Activated naive CD4-positive, alpha-beta T cell treated with anti-CD3 and anti-CD28 coated beads, Interleukin-2, amount 10 ng/mL, durations not matched to agents 7 days and 5 days (primary cell): ENCODE measurements at regions of chr6 and their contacts with region 1.

Region 1: DNA sequence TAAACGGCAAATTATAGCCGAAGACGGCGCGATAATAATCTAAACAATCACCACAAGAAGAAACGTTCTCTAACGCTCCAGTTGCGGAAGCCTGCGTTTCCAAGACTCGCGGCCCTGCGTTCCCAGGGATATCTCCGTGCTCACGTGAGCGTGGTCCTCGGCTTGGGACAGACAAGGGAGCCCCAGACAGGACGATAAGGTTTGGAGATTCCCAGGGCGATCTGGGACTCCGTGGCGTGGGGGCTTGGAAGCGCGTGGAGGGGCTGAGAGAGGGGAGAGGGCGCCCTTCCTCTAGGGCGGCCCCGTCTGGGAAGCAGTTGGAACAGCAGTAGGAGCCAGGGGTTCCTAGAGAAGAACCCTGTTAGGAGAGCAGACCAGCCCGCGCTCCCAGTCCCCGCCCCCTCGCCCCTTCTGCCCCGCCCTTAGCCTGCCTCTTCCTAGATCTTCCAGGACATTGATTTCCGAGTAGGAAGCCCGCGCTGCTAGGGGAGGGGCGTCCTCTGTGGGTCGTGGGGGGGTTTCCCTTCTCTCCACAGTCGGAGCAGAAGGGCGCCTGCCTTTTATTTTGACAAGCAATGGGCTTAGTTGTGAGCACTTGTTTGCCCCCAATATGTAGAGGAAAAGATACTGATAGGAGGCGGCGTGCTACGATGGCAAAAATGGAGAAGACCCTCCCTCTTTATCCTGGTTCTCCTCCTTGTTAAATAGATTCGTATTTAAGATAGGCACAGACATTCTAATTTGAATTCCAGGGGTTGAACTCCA is 10.6 kb downstream of the NRN1 start:
- DNase-seq: peak; percentile 59
- H3K4me3 Mint-ChIP-seq: peak overlapping the region; percentile 93
- H3K27ac Mint-ChIP-seq: peak overlapping the region; percentile 73
- H3K4me1 Mint-ChIP-seq: peaks cover 73% of the 10 kb centered on the region
- H3K27me3 Mint-ChIP-seq: peaks cover 100% of the 10 kb centered on the region

Region 2: DNA sequence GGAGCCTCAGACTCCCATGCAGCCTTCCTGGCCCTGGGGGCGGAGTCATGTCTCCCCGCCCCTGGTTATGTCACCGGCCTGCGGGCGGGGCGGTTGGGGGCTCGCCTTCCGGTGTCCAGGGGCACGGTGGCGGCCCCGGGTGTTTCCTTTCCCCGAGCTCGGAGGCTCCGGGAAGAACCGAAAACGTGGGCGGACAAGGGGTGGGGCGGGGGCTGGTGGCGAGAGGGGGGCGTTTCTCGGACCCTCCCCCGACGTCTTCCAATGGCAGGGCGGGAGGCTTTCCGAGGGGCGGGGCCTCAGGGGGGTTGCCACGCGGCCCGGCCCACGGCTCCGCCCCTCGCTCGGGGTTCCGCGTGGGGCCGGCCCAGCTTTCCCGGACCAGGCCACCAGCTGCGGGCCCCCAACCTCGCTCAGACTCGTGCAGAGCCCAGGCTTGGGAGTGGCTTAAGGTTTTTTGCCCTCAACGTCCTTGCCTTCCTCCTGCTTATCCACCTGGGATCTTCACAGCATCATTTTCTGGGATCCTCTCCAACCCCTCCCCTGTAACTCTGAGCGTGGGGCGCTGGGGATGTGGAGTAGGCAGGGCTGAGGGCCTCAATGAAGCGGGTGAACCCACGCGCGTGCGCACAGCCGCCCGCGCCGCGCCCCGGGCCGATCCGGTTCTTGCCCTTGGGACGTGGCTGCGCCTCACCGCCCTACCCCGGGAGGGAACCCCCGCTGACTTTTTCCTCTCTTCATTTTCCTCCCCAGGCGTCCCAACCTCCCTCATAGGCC is 12.7 kb after region 1 on chr6:
- CTCF ChIA-PET with region 1: interaction called, 10 read pairs
- DNase-seq: peak; percentile 74
- H3K4me3 Mint-ChIP-seq: peak overlapping the region; percentile 79
- H3K27ac Mint-ChIP-seq: peak overlapping the region; percentile 84
- H3K4me1 Mint-ChIP-seq: peaks cover 48% of the 10 kb centered on the region
- H3K27me3 Mint-ChIP-seq: peaks cover 90% of the 10 kb centered on the region